ENCODE measurements at regions of chr5 and their contacts with region 1.

Region 1: GRCh38 chr5:148455185-148455584 is 71.4 kb downstream of the FBXO38 start:
- DNase-seq: no peak
- ATAC-seq: no peak
- H3K4me3 Mint-ChIP-seq: no peak overlapping the region
- H3K27ac Mint-ChIP-seq: no peak overlapping the region
- H3K4me1 Mint-ChIP-seq: peaks cover 27% of the 10 kb centered on the region
- H3K27me3 Mint-ChIP-seq: no peaks in the 10 kb centered on the region
- CTCF ChIP-seq: no peak

Region 2: DNA sequence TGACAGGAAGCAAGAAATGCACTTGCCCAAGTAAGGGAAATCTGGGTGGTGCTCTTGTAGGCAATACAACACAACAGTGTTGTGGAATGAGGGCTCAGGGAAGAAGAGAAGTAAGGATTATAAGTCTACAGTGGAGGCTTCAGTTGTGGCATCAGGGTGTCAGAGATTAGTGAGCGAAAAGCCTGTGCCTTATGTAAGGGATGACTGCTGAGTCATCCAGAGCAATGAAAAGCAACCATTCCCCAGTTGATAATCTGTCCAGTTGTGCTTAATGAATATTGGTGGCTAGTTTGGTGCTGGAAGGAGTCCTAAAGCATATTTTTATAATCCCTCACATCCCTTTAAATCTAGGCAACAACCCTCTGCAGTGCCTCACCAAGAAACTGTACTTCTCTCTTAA is 29.4 kb before region 1 on chr5:
- CTCF ChIA-PET with region 1: no interaction called
- POLR2A ChIA-PET with region 1: no interaction called
- DNase-seq: no peak
- ATAC-seq: no peak
- H3K4me3 Mint-ChIP-seq: no peak overlapping the region
- H3K27ac Mint-ChIP-seq: no peak overlapping the region; the same call in 1 of the 2 replicates
- H3K4me1 Mint-ChIP-seq: no peaks in the 10 kb centered on the region
- H3K27me3 Mint-ChIP-seq: no peaks in the 10 kb centered on the region
- CTCF ChIP-seq: no peak

Region 3: DNA sequence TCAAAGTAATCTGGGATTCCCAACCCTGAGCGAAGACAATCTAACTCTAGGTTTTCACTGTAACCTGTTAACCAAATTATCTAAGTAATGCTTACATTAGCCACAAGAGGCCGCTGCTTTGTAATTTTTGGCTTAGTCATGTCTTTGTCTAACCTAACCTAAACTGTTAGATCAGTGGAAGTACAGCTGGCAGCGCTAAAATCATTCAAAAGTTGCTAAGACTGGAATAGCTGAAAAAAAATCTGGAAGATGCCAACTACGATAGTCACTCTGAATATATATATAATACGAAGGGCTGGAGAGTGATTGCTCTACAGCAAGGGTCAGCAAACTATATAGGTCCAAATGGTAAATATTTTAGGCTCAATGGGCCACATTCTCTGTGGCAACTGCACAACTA is 11.2 kb before region 1 on chr5:
- CTCF ChIA-PET with region 1: interaction called, 25 read pairs
- POLR2A ChIA-PET with region 1: no interaction called
- DNase-seq: peak; percentile 18
- ATAC-seq: peak; percentile 85
- H3K4me3 Mint-ChIP-seq: no peak overlapping the region
- H3K27ac Mint-ChIP-seq: no peak overlapping the region
- H3K4me1 Mint-ChIP-seq: peaks cover 13% of the 10 kb centered on the region
- H3K27me3 Mint-ChIP-seq: no peaks in the 10 kb centered on the region
- CTCF ChIP-seq: peak; percentile 62

Measured in WTC11 (cell line).